Breast epithelium (tissue), 4 donors: ENCODE measurements at regions of chr2 and their contacts with region 1.

Region 1: GRCh38 chr2:194077366-194077765 is 1579.7 kb upstream of the SLC39A10 start:
- DNase-seq: no peak
- H3K4me3 ChIP-seq: no peak overlapping the region
- H3K27ac ChIP-seq: no peak overlapping the region
- H3K4me1 ChIP-seq: no peaks in the 10 kb centered on the region
- H3K27me3 ChIP-seq: no peaks in the 10 kb centered on the region
- CTCF ChIP-seq: no peak
- POLR2A ChIP-seq: no peak

Region 2: DNA sequence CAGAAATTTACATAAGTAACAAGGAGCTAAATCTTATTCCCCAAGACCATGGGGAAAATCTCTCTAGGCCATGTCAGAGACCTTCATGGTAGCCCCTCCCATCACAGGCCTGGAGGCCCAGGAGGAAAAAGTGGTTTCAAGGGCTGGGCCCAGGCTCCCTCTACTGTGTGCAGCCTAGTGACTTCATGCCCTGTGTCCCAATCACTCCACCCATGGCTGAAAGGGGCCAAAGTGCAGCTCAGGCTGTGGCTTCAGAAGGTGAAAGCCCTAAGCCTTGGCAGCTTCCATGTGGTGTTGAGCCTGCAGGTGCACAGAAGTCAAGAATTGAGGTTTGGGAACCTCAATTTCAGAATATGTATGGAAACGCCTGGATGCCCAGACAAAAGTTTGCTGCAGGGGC is 33.0 kb before region 1 on chr2:
- intact Hi-C with region 1: loop called (anchors 2 kb)
- DNase-seq: no peak
- H3K4me3 ChIP-seq: no peak overlapping the region
- H3K27ac ChIP-seq: no peak overlapping the region
- H3K4me1 ChIP-seq: no peaks in the 10 kb centered on the region
- H3K27me3 ChIP-seq: no peaks in the 10 kb centered on the region
- CTCF ChIP-seq: no peak
- POLR2A ChIP-seq: no peak

Region 3: DNA sequence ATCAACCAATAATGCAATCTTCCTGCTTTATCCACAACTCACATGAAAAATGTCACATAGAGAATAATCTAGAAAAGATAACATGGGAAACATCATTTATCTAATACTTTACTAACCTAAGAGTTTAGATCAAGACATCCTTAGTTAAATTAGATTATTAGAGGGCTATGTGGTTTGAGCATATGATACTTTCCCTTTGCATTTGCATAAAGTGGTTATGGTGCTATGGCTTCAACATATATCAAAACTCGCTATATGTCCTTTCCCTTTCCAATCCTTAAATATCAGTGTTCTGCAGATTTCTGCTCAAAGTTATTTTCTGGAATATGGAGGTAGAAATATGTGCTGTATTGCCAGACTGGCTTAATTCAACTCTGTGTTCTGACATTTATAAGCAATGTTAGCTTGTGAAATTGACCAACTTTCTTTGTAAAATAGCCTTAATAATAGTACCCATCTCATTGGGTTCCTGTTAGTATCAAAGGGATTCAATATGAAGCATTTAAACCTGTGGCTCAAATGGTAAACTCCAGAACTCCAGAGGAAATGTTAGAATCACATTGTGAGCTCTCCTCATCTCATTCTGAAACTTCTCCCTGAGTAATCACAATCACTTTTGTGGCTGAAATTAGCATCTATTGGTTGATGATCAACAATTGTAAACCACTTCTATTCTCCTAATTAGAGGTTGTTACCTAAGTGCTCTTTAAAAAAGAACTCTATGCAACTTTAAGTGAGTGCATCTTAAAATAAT is 489.7 kb after region 1 on chr2:
- intact Hi-C with region 1: no loop called
- DNase-seq: no peak
- H3K4me3 ChIP-seq: no peak overlapping the region
- H3K27ac ChIP-seq: no peak overlapping the region
- H3K4me1 ChIP-seq: no peaks in the 10 kb centered on the region
- H3K27me3 ChIP-seq: no peaks in the 10 kb centered on the region
- CTCF ChIP-seq: no peak
- POLR2A ChIP-seq: no peak

Region 4: GRCh38 chr2:194750926-194751325 is 673.6 kb after region 1 on chr2:
- intact Hi-C with region 1: loop called (anchors 5 kb)
- DNase-seq: no peak
- H3K4me3 ChIP-seq: no peak overlapping the region
- H3K27ac ChIP-seq: no peak overlapping the region
- H3K4me1 ChIP-seq: no peaks in the 10 kb centered on the region
- H3K27me3 ChIP-seq: no peaks in the 10 kb centered on the region
- CTCF ChIP-seq: no peak
- POLR2A ChIP-seq: no peak